ENCODE measurements at regions of chr6 and their contacts with region 1.

Region 1: GRCh38 chr6:139219271-139219729 is 72.5 kb downstream of the TXLNB start:
- DNase-seq: peak; percentile 87
- H3K4me3 ChIP-seq: no peak overlapping the region
- H3K27ac ChIP-seq: peak overlapping the region; percentile 38
- H3K4me1 ChIP-seq: peaks cover 4% of the 10 kb centered on the region
- H3K27me3 ChIP-seq: no peaks in the 10 kb centered on the region
- CTCF ChIP-seq: peak; percentile 78 to 98

Region 2: GRCh38 chr6:139028658-139029469 is 190.4 kb before region 1 on chr6 and contains the start of gene ABRACL:
- CTCF ChIA-PET with region 1: no interaction called
- dilution Hi-C with region 1: no loop called
- in situ Hi-C with region 1: no loop called
- intact Hi-C with region 1: loop called (anchors 2 kb)
- DNase-seq: peak; percentile 77
- H3K4me3 ChIP-seq: peak within 1 kb of the TSS; percentile 81 to 98 (median 81)
- H3K27ac ChIP-seq: peak within 1 kb of the TSS; percentile 83
- H3K4me1 ChIP-seq: peaks cover 12% of the 10 kb centered on the region
- H3K27me3 ChIP-seq: no peaks in the 10 kb centered on the region
- CTCF ChIP-seq: no peak
- total RNA-seq, gene ABRACL: 42.5 to 50.4 TPM

Region 3: GRCh38 chr6:139124887-139125672 is 94.2 kb before region 1 on chr6:
- CTCF ChIA-PET with region 1: no interaction called
- dilution Hi-C with region 1: no loop called
- in situ Hi-C with region 1: no loop called
- intact Hi-C with region 1: loop called (anchors 2 kb)
- DNase-seq: peak; percentile 72
- H3K4me3 ChIP-seq: no peak overlapping the region
- H3K27ac ChIP-seq: no peak overlapping the region
- H3K4me1 ChIP-seq: peaks cover 17% of the 10 kb centered on the region
- H3K27me3 ChIP-seq: no peaks in the 10 kb centered on the region
- CTCF ChIP-seq: peak; percentile 37 to 55

Region 4: GRCh38 chr6:139149383-139149782 is 69.9 kb before region 1 on chr6:
- CTCF ChIA-PET with region 1: no interaction called
- dilution Hi-C with region 1: no loop called
- in situ Hi-C with region 1: no loop called
- intact Hi-C with region 1: no loop called
- DNase-seq: no peak
- H3K4me3 ChIP-seq: no peak overlapping the region
- H3K27ac ChIP-seq: no peak overlapping the region
- H3K4me1 ChIP-seq: peaks cover 11% of the 10 kb centered on the region
- H3K27me3 ChIP-seq: no peaks in the 10 kb centered on the region
- CTCF ChIP-seq: no peak

Region 5: GRCh38 chr6:139355172-139355571 is 135.9 kb after region 1 on chr6:
- CTCF ChIA-PET with region 1: no interaction called
- dilution Hi-C with region 1: no loop called
- in situ Hi-C with region 1: loop called (anchors 5 to 10 kb)
- intact Hi-C with region 1: no loop called
- DNase-seq: no peak
- H3K4me3 ChIP-seq: no peak overlapping the region
- H3K27ac ChIP-seq: no peak overlapping the region
- H3K4me1 ChIP-seq: peaks cover 2% of the 10 kb centered on the region
- H3K27me3 ChIP-seq: no peaks in the 10 kb centered on the region
- CTCF ChIP-seq: no peak

Region 6: DNA sequence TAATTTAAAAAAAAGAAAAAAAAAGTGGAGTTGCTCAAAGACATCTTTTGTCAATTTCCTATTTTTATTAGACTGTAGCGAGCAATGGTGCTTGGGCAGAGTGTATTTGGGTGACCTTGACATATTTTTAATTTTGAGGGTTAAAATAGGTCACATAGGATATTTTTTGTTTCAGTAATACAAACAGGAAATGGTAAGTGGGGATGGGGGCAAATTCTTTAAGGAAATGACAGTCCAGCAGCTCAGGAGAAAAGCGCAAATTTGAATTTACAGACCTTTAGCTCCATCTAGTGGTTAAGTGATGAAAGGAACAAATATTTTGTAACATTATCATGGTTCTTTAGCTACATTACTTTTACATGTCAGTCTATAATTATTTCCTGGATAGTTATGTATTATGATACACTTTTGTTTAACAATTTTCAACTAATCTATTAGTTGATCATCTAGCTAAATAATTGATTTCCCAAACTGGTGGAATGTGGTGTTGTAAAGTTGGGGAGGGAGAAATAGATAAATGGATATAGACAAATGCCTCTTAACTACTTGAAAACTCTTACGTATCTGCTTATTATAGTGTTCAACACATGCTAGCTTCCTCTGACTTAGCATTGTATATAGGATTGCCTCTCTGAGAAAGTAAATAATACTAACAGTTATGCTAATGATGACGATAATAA is 145.1 kb after region 1 on chr6:
- CTCF ChIA-PET with region 1: interaction called, 20 read pairs
- dilution Hi-C with region 1: no loop called
- in situ Hi-C with region 1: loop called (anchors 5 to 10 kb)
- intact Hi-C with region 1: loop called (anchors 1 kb)
- DNase-seq: peak; percentile 27
- H3K4me3 ChIP-seq: no peak overlapping the region
- H3K27ac ChIP-seq: no peak overlapping the region
- H3K4me1 ChIP-seq: peaks cover 9% of the 10 kb centered on the region
- H3K27me3 ChIP-seq: no peaks in the 10 kb centered on the region
- CTCF ChIP-seq: peak; percentile 41 to 53

Region 7: DNA sequence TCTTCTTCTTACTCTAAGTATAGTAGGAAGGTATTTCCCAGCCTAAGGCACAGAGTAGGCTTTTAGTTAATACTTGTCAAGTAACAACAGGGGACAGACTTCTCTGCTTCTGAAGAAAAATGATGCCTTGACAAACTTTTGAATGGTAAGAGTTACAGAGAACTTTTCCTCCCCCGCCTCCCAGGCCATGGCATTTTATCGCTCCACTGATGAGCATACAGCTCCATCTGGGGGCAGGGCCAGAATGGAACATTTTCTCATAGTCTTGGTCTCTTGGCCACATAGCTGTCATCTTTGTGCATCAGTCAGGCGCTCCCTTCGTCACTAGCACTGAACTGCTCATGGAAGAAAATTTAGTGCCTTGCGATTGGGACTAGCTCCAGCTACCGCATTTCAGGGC is 1222.0 kb after region 1 on chr6:
- CTCF ChIA-PET with region 1: no interaction called
- dilution Hi-C with region 1: no loop called
- in situ Hi-C with region 1: no loop called
- intact Hi-C with region 1: loop called (anchors 10 kb)
- DNase-seq: peak; percentile 28
- H3K4me3 ChIP-seq: no peak overlapping the region
- H3K27ac ChIP-seq: no peak overlapping the region
- H3K4me1 ChIP-seq: peaks cover 18% of the 10 kb centered on the region
- H3K27me3 ChIP-seq: no peaks in the 10 kb centered on the region
- CTCF ChIP-seq: peak; percentile 43 to 78